Transverse colon (tissue), 4 donors: ENCODE measurements at regions of chr3 and their contacts with region 1.

Region 1: GRCh38 chr3:34515867-34516266 is 717.4 kb downstream of the PDCD6IP start:
- DNase-seq: no peak
- H3K4me3 ChIP-seq: no peak overlapping the region
- H3K27ac ChIP-seq: no peak overlapping the region
- H3K4me1 ChIP-seq: no peaks in the 10 kb centered on the region
- H3K27me3 ChIP-seq: no peaks in the 10 kb centered on the region
- CTCF ChIP-seq: no peak
- EP300 ChIP-seq: no peak
- POLR2A ChIP-seq: no peak

Region 2: GRCh38 chr3:34323517-34323916 is 192.3 kb before region 1 on chr3:
- in situ Hi-C with region 1: no loop called
- intact Hi-C with region 1: loop called (anchors 5 kb)
- DNase-seq: no peak
- H3K4me3 ChIP-seq: no peak overlapping the region
- H3K27ac ChIP-seq: no peak overlapping the region
- H3K4me1 ChIP-seq: no peaks in the 10 kb centered on the region
- H3K27me3 ChIP-seq: no peaks in the 10 kb centered on the region
- CTCF ChIP-seq: no peak
- EP300 ChIP-seq: no peak
- POLR2A ChIP-seq: no peak

Region 3: DNA sequence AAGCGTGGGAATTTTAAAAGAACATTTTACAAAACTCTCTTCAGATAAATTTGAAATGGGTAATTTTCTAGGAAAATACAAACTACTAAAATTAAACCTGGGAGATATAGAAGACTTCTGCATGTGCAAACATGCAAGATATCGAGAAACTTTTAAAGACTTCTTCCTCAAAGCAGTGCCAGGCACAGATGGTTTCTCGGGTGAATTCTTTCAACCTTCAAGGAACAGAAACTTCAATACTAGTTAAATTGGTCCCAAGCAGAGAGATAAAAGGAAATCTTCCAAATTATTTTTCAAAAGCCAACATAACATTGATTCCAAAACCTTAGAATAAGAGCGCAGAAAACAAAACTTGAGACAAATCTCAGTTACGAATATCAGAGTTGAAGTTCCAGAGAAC is 15.3 kb after region 1 on chr3:
- in situ Hi-C with region 1: no loop called
- intact Hi-C with region 1: no loop called
- DNase-seq: no peak
- H3K4me3 ChIP-seq: no peak overlapping the region
- H3K27ac ChIP-seq: no peak overlapping the region
- H3K4me1 ChIP-seq: no peaks in the 10 kb centered on the region
- H3K27me3 ChIP-seq: no peaks in the 10 kb centered on the region
- CTCF ChIP-seq: no peak
- EP300 ChIP-seq: no peak
- POLR2A ChIP-seq: no peak